ENCODE measurements at regions of chr6 and their contacts with region 1.

Region 1: DNA sequence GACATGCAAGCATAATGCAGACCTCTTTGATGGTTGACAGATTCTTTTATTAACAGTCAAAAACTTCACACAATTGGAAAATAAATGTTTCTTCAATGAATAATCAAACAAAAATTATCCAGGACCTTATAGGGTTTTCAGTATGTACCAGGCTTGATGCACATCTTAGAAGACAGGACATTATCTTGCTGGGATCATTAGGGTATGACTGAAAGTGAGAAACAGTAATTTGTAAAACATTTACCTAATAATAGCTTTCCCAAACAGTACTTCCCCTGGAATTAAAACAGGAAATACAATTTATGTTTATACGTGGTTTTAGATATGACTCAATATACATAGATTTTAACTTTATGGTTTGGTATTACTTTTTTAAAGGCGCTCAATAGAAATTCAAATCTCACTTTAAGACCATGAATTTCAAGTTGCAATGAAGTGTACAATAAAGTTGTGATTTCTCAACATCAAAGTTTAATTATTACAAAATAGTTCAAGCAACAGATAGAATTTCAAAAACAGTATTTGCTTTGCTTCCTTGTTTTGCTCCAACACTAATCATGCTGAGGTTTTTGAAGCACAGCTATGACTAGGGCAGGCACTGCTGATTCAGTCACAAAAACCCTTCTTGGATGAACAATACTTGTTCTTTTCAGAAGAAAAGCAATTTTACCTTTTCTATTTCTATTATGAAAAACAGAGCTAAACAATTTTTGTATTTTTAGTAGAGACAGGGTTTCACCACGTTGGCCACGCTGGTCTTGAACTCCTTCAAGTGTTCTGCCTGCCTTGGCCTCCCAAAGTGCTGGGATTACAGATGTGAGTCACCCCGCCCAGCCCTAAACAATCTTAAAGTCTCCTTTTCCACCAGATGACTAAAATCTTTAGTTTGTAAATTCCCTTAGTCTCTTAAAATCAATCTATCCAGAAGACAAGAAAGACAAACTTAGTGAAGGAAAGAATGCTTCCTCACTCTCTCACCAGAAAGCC is 13.7 kb downstream of the SOD2 start:
- DNase-seq: no peak
- ATAC-seq: no peak

Region 2: DNA sequence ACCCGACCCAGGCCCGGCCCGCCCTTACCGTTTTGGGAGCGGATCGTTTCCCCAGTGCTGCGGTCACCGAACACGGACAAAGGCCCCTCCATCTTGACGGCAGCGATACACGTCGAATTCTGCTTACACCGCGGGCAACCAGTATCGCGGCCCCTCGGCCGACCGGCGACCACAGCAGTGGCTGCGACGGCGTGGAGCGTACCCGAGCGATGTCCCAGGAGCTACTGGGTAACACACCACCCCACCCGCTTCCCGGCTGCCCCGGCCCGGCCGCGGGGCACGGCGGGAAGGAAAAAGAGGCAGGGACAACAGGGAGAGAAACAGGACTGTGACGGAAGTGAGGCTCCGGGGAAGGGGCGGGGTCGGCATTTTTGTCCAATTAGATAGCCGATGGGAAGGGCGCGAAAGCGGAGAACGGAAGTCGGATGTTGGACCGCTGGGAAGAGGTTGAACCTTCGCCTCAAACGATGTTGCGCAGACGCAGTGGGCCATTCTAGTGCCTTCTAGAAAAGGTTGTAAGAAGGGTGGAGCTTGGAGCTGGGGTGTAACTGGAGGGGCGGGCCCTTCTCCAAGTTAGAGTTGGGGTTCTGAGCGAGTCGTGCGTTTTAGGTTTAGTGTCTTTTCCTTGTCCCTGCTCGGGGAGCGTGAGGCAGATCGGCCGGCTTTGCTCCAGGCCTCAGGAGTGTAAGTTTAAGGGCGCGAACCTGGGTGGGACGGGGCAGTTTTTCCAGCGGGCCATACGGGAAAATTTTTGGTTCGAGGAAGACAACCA is 110.2 kb after region 1 on chr6 and contains the start of gene TCP1:
- intact Hi-C with region 1: loop called in 1 of 2 experiments (anchors 10 kb)
- DNase-seq: peak; percentile 100
- ATAC-seq: peak; percentile 84
- total RNA-seq, gene TCP1: 165 to 172 TPM

Measured in left colon (tissue), 2 donors.